ENCODE measurements at regions of chr7 and their contacts with region 1.

Region 1: DNA sequence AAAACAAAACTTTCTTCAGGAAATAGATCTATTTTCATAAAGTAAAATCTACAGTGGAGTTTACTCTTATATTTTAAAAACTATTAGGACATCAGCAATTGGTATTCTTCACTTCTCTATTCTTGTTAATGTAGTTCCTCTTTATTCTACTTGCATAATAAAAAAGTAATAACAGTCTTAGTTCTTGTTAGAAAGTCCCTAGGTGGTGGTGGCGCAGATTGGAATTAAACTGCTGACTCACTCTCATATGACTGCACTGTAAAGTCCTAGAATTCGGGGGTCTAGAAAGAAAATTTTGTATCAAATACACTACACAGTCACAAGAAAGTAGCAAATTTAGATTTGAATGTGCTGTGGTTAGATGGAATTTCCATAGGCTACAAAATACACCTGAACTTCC is 44.6 kb upstream of the TES start:
- DNase-seq: no peak
- ATAC-seq: no peak
- H3K4me3 Mint-ChIP-seq: no peak overlapping the region
- H3K27ac Mint-ChIP-seq: no peak overlapping the region
- H3K4me1 Mint-ChIP-seq: peaks cover 40% of the 10 kb centered on the region
- H3K27me3 Mint-ChIP-seq: peaks cover 14% of the 10 kb centered on the region

Region 2: GRCh38 chr7:116101704-116102103 is 64.0 kb before region 1 on chr7:
- CTCF ChIA-PET with region 1: no interaction called
- POLR2A ChIA-PET with region 1: no interaction called
- DNase-seq: no peak
- ATAC-seq: no peak
- H3K4me3 Mint-ChIP-seq: no peak overlapping the region
- H3K27ac Mint-ChIP-seq: no peak overlapping the region
- H3K4me1 Mint-ChIP-seq: no peaks in the 10 kb centered on the region
- H3K27me3 Mint-ChIP-seq: peaks cover 7% of the 10 kb centered on the region

Region 3: DNA sequence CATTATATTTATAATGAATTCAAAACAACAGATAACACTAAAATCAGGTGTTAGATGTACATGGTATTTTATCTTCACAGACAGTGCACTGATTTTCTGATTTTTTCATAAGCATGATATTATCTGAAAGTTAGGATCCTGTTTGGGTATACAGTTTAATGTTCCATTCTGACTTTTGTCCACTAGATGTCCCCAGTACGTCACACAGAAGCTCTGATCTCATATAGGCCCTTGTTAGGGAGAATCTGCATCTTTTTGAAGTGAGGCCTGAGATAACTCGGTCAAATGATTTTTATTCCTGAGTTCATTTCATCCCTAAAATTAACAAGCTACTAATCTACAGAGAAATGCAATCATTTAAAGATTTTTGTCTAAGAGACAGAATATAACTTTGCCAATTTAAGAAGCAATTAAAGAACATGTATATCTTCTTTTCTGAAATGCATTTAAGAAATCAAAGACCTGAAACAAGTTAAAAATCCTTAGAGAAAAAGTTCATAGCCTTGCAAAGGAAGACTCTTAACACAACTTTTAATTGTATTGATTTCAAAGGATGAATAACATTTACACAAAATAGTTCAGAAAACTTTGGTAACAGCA is 27.4 kb before region 1 on chr7:
- CTCF ChIA-PET with region 1: interaction called, 31 read pairs
- POLR2A ChIA-PET with region 1: no interaction called
- DNase-seq: peak; percentile 64
- ATAC-seq: peak; percentile 92
- H3K4me3 Mint-ChIP-seq: no peak overlapping the region
- H3K27ac Mint-ChIP-seq: no peak overlapping the region
- H3K4me1 Mint-ChIP-seq: peaks cover 34% of the 10 kb centered on the region
- H3K27me3 Mint-ChIP-seq: peaks cover 16% of the 10 kb centered on the region

Region 4: GRCh38 chr7:116145245-116145852 is 20.4 kb before region 1 on chr7:
- CTCF ChIA-PET with region 1: interaction called, 31 read pairs
- POLR2A ChIA-PET with region 1: no interaction called
- DNase-seq: peak; percentile 80
- ATAC-seq: peak; percentile 98
- H3K4me3 Mint-ChIP-seq: peak overlapping the region; percentile 67
- H3K27ac Mint-ChIP-seq: peak overlapping the region; percentile 94
- H3K4me1 Mint-ChIP-seq: peaks cover 73% of the 10 kb centered on the region
- H3K27me3 Mint-ChIP-seq: peaks cover 3% of the 10 kb centered on the region

Region 5: DNA sequence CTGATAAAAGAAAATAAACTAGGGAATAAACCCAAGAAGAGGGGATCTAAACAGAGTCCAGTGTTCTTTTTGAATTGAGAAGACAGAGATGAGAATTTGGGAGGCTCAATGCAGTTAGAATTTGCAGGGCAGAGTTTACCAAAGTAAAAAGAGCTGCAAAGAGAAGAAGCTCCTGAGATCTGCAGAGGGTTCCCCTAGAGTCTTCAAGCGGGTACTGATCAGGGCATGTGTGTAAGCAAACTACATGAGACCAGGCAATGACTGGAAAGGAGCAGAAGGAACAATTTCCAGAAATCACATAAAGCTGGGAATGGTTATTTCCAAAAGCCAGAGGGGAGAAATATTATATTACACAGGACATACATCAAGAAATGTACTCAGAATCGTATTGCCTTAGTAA is 13.4 kb before region 1 on chr7:
- CTCF ChIA-PET with region 1: interaction called, 23 read pairs
- POLR2A ChIA-PET with region 1: no interaction called
- DNase-seq: no peak
- ATAC-seq: no peak
- H3K4me3 Mint-ChIP-seq: no peak overlapping the region
- H3K27ac Mint-ChIP-seq: no peak overlapping the region
- H3K4me1 Mint-ChIP-seq: peaks cover 31% of the 10 kb centered on the region
- H3K27me3 Mint-ChIP-seq: peaks cover 16% of the 10 kb centered on the region

Region 6: GRCh38 chr7:116327752-116328151 is 162.0 kb after region 1 on chr7:
- CTCF ChIA-PET with region 1: no interaction called
- POLR2A ChIA-PET with region 1: no interaction called
- DNase-seq: no peak
- ATAC-seq: no peak
- H3K4me3 Mint-ChIP-seq: no peak overlapping the region
- H3K27ac Mint-ChIP-seq: no peak overlapping the region
- H3K4me1 Mint-ChIP-seq: no peaks in the 10 kb centered on the region
- H3K27me3 Mint-ChIP-seq: peaks cover 5% of the 10 kb centered on the region

Measured in activated CD8-positive, alpha-beta T cell treated with anti-CD3 and anti-CD28 coated beads, Interleukin-2, amount 10 ng/mL, durations not matched to agents 7 days and 5 days (primary cell).